Astrocyte of the cerebellum (primary cell): ENCODE measurements at regions of chr6 and their contacts with region 1.

Region 1: GRCh38 chr6:6912817-6913744 is 194.7 kb upstream of the RREB1 start:
- DNase-seq: no peak
- H3K4me3 ChIP-seq: no peak overlapping the region
- CTCF ChIP-seq: no peak

Region 2: DNA sequence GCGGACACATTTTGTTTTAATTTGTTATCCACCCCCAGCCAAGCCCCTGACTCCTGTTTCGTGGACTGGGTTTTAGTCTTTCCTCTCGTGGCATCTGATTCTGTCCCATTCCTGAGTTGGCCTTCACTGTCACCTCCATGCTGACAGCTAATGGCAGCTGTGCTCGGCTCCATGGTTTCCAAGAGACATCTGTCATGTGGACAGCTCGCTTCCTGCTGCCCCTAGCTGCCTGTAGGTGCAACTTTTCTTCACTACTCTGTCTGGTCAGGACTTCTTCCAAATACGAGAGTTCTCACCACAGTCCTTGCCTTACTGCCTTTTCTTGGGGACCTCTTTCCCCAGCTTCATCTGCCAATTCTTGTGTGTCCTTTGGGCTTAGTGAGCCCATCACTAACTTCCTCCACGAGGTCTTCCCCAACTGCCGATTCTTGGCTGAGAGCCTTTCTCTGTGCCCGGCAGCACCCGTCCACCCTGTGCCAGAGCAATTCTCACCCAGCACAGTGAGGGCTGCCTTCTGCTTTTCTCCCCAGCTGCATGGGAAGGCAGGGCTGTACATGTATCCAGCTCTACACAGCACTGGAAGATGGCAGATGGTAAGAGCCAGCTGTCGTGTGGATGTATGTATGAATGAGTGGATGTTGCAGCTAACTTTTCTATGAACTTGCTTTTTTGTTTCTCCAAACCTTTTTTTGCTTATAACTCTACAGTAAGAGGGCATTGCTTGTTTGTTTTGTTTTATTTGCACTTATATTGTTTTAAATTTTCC is 733.0 kb before region 1 on chr6:
- in situ Hi-C with region 1: no loop called
- DNase-seq: no peak
- H3K4me3 ChIP-seq: no peak overlapping the region
- CTCF ChIP-seq: no peak

Region 3: GRCh38 chr6:6851059-6851948 is 61.8 kb before region 1 on chr6:
- in situ Hi-C with region 1: no loop called
- DNase-seq: peak; percentile 92
- H3K4me3 ChIP-seq: no peak overlapping the region
- CTCF ChIP-seq: no peak

Region 4: GRCh38 chr6:6872459-6873356 is 40.4 kb before region 1 on chr6:
- in situ Hi-C with region 1: loop called (anchors 5 kb)
- DNase-seq: no peak
- H3K4me3 ChIP-seq: no peak overlapping the region
- CTCF ChIP-seq: no peak